ENCODE measurements at regions of chr18 and their contacts with region 1.

Region 1: DNA sequence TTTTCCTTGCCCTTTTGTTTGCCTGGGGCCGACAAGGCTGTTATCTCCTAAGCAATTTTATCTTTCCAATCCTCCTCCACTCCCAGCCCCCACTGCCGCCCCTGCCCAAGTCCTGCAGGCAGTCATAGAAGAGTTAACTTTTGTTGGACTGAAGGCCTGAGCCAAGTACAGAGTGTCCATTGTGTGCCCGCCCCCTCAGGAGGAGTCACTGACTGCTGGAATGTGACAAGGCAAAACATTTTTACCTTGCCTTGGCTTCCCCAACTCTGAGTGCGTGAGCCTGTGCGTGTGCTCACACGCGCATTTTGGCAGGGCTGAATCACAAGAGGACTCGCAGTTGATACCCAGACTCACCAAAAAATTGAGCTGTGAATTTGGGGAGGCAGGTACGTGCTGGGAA is 16.2 kb downstream of the SETBP1 start:
- DNase-seq: peak; percentile 70
- H3K4me3 ChIP-seq: peak overlapping the region; percentile 27 to 58 (median 47)
- H3K27ac ChIP-seq: peak overlapping the region; percentile 67
- H3K4me1 ChIP-seq: peaks cover 90% of the 10 kb centered on the region
- H3K27me3 ChIP-seq: no peaks in the 10 kb centered on the region
- CTCF ChIP-seq: no peak

Region 2: GRCh38 chr18:44685296-44685695 is 11.6 kb before region 1 on chr18:
- CTCF ChIA-PET with region 1: interaction called, 7 read pairs
- dilution Hi-C with region 1: no loop called
- in situ Hi-C with region 1: no loop called
- intact Hi-C with region 1: loop called (anchors 1 kb)
- DNase-seq: no peak
- H3K4me3 ChIP-seq: no peak overlapping the region
- H3K27ac ChIP-seq: no peak overlapping the region
- H3K4me1 ChIP-seq: peaks cover 32% of the 10 kb centered on the region
- H3K27me3 ChIP-seq: no peaks in the 10 kb centered on the region
- CTCF ChIP-seq: no peak

Region 3: DNA sequence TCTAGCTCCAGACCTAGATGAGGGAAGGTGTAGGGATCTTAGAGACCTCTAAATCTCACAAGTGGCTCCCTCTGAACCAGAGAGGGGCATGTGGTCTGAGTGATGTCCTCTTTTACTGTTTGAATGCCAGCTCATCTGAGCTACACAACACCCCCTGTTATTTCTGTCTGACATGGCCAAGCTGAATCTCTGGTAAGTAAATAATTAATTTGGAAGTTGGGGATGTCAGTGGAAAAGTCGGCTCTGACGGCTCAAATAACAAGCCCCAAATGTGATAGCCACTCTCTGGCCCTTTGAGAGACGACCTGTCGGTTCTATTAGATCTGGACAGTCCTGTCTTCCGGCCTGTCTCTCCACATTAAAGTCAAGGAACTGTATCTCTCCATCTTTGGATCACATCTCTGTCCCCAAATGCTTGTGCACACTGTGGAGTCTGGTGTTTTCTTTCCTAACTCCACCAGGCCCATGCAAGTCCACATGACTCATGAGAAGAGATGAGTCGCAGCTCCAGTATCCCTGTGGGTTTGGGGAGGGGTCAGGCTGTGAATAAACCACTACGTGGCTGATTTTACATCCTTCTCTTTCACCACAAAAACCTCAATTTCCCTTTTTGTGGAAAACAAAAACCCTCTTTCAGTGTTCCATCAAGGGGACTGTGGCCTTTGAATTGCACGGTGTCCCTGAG is 36.3 kb after region 1 on chr18:
- CTCF ChIA-PET with region 1: interaction called, 7 read pairs
- dilution Hi-C with region 1: no loop called
- in situ Hi-C with region 1: no loop called
- intact Hi-C with region 1: loop called (anchors 2 kb)
- DNase-seq: peak; percentile 93
- H3K4me3 ChIP-seq: no peak overlapping the region
- H3K27ac ChIP-seq: peak overlapping the region; percentile 88
- H3K4me1 ChIP-seq: peaks cover 56% of the 10 kb centered on the region
- H3K27me3 ChIP-seq: no peaks in the 10 kb centered on the region
- CTCF ChIP-seq: no peak

Region 4: DNA sequence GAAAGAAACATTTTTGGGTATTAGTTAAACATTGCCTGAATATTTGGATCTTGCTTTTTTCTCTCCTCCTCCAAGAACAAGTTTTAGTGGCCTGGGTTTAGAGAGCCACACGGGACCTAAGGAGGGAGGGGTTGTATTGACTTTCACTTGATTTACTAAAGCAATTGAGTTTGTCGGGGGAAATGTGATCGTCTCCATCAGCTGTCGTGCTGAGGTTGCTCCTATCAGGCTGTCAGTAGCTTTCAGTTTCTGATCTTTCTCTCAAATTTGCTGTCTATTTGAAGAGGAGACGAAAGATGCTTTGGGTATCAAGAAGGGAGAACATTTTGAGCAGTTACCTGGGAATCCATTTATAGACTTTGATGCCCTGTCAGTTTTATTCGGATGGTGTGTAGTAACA is 89.8 kb after region 1 on chr18:
- CTCF ChIA-PET with region 1: no interaction called
- dilution Hi-C with region 1: no loop called
- in situ Hi-C with region 1: no loop called
- intact Hi-C with region 1: loop called (anchors 5 kb)
- DNase-seq: no peak
- H3K4me3 ChIP-seq: no peak overlapping the region
- H3K27ac ChIP-seq: no peak overlapping the region
- H3K4me1 ChIP-seq: peaks cover 18% of the 10 kb centered on the region
- H3K27me3 ChIP-seq: no peaks in the 10 kb centered on the region
- CTCF ChIP-seq: no peak

Region 5: GRCh38 chr18:44986933-44987332 is 290.0 kb after region 1 on chr18:
- CTCF ChIA-PET with region 1: no interaction called
- dilution Hi-C with region 1: no loop called
- in situ Hi-C with region 1: no loop called
- intact Hi-C with region 1: loop called (anchors 10 kb)
- DNase-seq: no peak
- H3K4me3 ChIP-seq: no peak overlapping the region
- H3K27ac ChIP-seq: no peak overlapping the region
- H3K4me1 ChIP-seq: peaks cover 6% of the 10 kb centered on the region
- H3K27me3 ChIP-seq: no peaks in the 10 kb centered on the region
- CTCF ChIP-seq: no peak